Calu3 (cell line): ENCODE measurements at regions of chr17 and their contacts with region 1.

Region 1: DNA sequence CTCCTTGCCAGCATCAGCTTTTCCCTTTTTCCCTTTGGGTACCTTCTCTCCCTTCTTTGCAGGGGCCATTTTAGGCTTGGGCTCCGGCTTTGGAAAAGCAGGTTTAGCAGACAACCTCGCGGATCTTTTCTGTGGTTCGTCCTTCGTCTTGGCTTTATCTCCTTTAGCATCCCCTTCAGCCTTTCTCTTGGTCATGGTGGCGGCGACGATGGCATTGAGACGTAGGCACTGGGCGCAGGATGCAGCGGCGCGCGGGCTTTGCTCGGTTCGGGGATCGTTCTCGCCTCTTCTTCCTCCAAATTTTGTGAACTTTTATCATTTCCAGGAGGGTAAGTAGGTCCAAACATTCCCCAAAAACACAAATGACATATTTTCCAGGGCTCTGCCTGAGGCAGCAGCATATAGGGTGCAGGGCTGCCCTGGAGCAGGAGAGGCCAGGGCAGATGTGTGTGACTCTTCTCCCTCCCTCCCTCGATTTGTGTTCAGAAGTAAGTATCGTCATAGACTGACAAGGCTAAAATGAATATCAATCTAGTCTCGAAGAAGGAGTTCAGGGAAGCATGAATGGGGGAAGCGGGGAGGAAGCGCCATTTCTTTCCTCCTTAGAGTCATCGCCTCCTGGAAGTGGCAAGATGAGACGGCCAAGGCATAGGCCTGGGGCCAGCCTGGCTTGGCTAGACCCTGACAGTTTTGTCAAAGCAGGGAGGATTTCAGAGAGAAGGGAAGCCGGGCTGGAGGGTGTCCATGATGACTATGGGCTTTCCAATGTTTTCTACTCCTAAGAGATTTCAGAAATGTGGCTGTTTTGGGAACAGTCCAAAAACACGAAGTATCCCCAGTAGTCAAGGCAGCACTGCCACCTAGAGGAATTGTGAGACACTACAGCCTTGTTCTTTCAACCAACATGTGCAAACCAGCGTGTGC is 13.2 kb downstream of the CHCT1 start:
- DNase-seq: peak; percentile 60
- H3K4me3 Mint-ChIP-seq: no peak overlapping the region
- H3K27ac Mint-ChIP-seq: no peak overlapping the region
- H3K4me1 Mint-ChIP-seq: no peaks in the 10 kb centered on the region
- H3K27me3 Mint-ChIP-seq: no peaks in the 10 kb centered on the region
- CTCF ChIP-seq: peak; percentile 63

Region 2: GRCh38 chr17:60142872-60143499 is 292.5 kb before region 1 on chr17:
- CTCF ChIA-PET with region 1: no interaction called
- intact Hi-C with region 1: loop called (anchors 10 kb)
- DNase-seq: peak; percentile 86
- H3K4me3 Mint-ChIP-seq: peak overlapping the region; percentile 45
- H3K27ac Mint-ChIP-seq: peak overlapping the region; percentile 20
- H3K4me1 Mint-ChIP-seq: peaks cover 19% of the 10 kb centered on the region
- H3K27me3 Mint-ChIP-seq: peaks cover 44% of the 10 kb centered on the region
- CTCF ChIP-seq: peak; percentile 50

Region 3: GRCh38 chr17:60231234-60231633 is 204.3 kb before region 1 on chr17:
- CTCF ChIA-PET with region 1: interaction called, 4 read pairs
- intact Hi-C with region 1: loop called (anchors 2 kb)
- DNase-seq: no peak
- H3K4me3 Mint-ChIP-seq: no peak overlapping the region
- H3K27ac Mint-ChIP-seq: no peak overlapping the region
- H3K4me1 Mint-ChIP-seq: no peaks in the 10 kb centered on the region
- H3K27me3 Mint-ChIP-seq: no peaks in the 10 kb centered on the region
- CTCF ChIP-seq: no peak

Region 4: DNA sequence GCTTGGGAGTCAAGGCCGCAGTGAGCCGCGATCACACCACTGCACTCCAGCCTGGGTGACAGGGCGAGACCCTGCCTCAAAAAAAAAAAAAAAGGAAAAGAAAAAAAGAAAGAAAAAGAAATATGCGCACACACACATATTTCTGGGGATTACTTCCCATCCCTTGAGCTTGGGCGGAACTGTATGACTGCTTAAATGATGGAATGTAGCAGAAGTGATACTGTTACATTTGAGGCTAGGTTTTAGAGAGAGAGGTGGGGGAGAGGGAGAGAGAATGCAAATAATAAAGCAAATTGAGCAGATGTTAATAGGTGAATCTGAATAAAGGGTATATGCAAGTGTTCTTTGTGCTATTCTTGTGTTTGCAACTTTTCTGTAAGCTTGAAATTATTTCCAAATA is 31.5 kb before region 1 on chr17:
- CTCF ChIA-PET with region 1: no interaction called
- intact Hi-C with region 1: loop called (anchors 1 kb)
- DNase-seq: no peak
- H3K4me3 Mint-ChIP-seq: no peak overlapping the region
- H3K27ac Mint-ChIP-seq: no peak overlapping the region
- H3K4me1 Mint-ChIP-seq: no peaks in the 10 kb centered on the region
- H3K27me3 Mint-ChIP-seq: no peaks in the 10 kb centered on the region
- CTCF ChIP-seq: no peak